ENCODE measurements at regions of chr21 and their contacts with region 1.

Region 1: GRCh38 chr21:41641821-41642701 is 124.8 kb downstream of the RIPK4 start:
- DNase-seq: peak; percentile 94
- ATAC-seq: peak; percentile 93
- H3K4me3 ChIP-seq: no peak overlapping the region
- H3K27ac ChIP-seq: peak overlapping the region; percentile 73
- H3K4me1 ChIP-seq: peaks cover 15% of the 10 kb centered on the region
- H3K27me3 ChIP-seq: no peaks in the 10 kb centered on the region
- CTCF ChIP-seq: no peak
- POLR2A ChIP-seq: no peak
- RAD21 ChIP-seq: no peak

Region 2: DNA sequence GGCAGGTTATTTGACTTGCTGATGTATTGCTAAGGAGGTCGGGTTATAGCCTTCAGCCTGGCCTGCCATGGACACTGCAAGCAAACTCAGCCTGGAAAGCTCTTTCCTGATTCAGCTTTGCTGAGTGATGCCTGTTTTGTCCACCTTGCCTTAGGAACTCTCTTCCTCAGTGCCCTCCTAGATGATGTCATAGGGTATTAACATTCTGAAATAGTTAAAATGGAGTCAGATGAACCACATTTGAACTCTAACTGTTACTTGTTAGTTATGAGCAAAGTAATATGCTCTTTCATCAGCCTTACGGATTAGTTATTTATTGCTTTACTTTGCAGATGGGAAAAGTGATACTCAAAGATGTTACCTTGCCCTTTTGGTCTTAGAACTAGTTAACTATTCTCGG is 1328.8 kb before region 1 on chr21:
- CTCF ChIA-PET with region 1: no interaction called
- POLR2A ChIA-PET with region 1: no interaction called
- dilution Hi-C with region 1: no loop called
- in situ Hi-C with region 1: no loop called
- intact Hi-C with region 1: no loop called
- DNase-seq: no peak
- ATAC-seq: no peak
- H3K4me3 ChIP-seq: no peak overlapping the region
- H3K27ac ChIP-seq: no peak overlapping the region
- H3K4me1 ChIP-seq: no peaks in the 10 kb centered on the region
- H3K27me3 ChIP-seq: no peaks in the 10 kb centered on the region
- CTCF ChIP-seq: no peak
- POLR2A ChIP-seq: no peak
- RAD21 ChIP-seq: no peak

Region 3: DNA sequence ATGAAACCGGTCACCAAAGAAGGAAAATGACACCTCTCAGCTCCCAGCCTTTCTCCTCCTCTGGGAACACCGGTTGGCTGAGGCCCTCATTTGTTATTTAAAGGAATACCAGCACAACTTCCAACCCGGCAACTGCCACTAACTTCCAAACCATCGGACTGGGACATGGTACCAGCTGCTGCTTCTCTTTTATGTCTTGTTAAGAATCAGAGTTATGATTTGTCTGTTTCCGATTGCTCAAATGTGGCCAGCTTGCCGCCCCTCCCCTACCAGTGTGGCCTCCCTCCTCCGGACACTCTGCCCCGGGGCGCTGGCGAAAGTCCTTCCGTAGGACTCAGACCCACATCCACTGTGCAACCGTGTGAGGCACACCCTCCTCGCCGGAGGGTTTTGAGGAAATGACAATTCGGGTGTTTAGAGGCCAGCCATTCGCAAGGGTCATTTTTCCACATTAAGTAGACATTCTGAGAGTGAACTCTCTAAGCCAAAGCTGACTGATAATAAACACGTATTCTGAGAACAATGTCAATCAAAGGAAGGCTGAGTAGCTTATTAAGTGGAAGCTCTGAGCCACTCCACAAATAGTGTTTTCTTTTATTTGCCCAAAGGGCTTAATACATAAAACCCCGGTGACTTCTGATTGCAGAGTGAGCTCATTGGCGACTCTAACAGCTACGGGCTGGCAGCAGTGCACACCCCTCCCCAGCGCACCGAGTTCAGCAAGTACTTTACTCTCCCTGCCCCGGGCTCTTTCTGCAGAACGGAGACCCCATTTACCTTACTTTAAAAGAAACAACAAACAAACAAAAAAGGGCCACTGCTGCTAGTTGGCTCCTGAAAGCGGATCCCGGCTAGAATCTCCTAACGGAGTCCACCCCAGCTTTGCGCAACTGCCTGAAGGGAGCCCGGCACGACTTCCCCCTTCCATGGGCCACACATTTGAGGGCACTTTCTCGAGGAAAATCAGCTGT is 119.4 kb after region 1 on chr21:
- CTCF ChIA-PET with region 1: no interaction called
- POLR2A ChIA-PET with region 1: no interaction called
- dilution Hi-C with region 1: no loop called
- in situ Hi-C with region 1: no loop called
- intact Hi-C with region 1: loop called (anchors 1 kb)
- DNase-seq: no peak
- ATAC-seq: peak; percentile 28
- H3K4me3 ChIP-seq: no peak overlapping the region
- H3K27ac ChIP-seq: no peak overlapping the region
- H3K4me1 ChIP-seq: peaks cover 2% of the 10 kb centered on the region; the same call in 1 of the 2 replicates
- H3K27me3 ChIP-seq: peaks cover 69% of the 10 kb centered on the region
- CTCF ChIP-seq: no peak
- POLR2A ChIP-seq: no peak
- RAD21 ChIP-seq: no peak